ENCODE measurements at regions of chr1 and their contacts with region 1.

Region 1: GRCh38 chr1:209692745-209693504 is 11.7 kb upstream of the HSD11B1 start:
- DNase-seq: peak; percentile 75
- ATAC-seq: peak; percentile 67

Region 2: GRCh38 chr1:209576798-209577197 is 116.1 kb before region 1 on chr1:
- intact Hi-C with region 1: loop called (anchors 2 kb)
- DNase-seq: peak; percentile 80
- ATAC-seq: peak; percentile 93

Region 3: GRCh38 chr1:209601809-209602657 is 90.9 kb before region 1 on chr1:
- intact Hi-C with region 1: loop called (anchors 1 kb)
- DNase-seq: no peak
- ATAC-seq: peak; percentile 85

Region 4: DNA sequence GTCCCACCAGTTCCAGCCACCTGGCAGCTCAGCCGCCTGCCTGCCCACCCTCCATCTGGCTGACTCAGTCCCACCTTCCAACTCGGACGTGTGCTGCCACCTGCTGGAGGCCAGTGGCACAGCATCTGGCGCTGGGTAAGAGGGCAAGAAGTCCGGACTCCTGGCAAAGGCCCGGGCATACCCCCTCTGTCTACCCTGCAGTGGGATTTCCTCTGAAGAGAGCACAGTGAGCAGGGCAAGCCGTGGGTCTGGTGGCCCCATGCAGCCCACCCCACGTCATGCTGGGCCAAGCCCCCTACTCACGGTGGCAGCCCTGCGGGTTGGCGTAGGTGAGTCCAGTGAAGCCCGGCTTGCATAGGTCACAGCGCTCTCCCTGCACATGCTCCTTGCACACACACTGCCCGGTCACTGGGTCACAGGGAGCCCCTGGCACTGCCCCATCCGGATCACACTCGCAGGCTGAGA is 65.2 kb before region 1 on chr1:
- intact Hi-C with region 1: loop called (anchors 2 kb)
- DNase-seq: peak; percentile 86
- ATAC-seq: peak; percentile 75

Region 5: DNA sequence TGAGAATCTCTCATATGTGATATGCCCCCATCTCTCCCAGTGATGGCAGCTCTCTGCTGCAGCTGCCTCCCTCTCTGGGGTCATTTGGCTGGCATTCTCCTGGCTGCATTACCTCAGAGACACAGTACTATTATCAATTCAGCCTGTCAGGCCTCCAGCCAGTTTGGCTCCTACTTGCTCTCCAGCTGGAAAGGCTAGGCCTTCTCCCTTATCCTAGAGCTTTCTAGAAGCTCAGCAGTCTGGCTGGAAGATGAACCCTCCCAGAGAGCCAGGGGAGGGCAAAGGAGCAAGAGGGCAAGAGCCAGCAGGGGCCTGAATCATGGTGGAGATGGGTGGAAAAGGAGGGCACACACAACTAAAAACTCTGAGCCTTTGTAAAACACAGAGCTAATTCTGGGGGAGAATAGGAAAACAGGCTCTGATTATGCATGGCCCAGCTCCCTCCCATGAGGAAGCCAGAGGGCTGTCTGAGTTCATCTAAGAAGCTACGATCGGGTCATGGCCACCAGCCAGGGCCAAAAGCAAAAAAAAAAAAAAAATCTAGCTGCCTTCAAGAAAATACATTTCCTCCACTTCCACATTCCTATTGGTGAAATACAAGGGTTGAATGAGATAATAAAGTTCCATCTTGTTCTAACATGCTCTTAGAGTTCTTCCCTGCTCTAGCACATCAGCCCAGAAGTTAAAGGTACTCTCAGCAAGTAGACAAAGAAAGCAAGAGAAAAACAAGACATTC is 49.5 kb before region 1 on chr1:
- intact Hi-C with region 1: loop called (anchors 5 kb)
- DNase-seq: peak; percentile 82
- ATAC-seq: peak; percentile 79

Measured in Right ventricle myocardium inferior (tissue), 1 donor.